PC-9 (cell line): ENCODE measurements at regions of chr14 and their contacts with region 1.

Region 1: DNA sequence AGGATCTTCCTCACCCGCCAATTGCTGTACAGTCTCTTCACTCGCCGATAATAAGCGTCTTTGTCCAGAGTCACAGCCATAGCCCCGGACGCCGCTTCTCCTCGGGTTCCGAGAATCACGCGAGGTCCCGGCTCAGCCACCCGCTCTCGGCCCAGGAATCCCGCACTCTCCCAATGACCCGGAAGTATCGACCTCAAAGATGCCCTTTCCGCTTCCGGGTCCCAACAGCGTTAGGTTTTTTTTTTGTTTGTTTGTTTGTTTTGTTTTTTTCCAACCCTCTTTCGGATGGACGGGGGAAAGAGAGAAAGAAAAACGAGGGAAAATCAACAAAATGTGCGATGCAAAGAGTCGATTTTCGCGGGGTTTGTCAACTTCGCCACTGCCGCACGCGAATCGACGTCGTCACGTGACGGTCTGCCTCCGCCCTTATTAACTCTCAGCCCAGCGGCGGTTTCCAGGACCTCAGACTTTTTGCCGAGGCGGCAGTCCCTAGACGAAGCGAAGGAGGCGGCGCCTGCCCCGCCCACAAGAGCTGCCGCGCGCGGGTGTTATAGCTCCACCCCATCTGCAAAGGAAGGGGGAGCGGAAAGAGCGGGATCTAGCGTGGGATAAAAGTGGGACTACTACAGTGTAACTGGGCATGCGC is at the start of gene SUPT16H:
- DNase-seq: peak; percentile 81 to 83
- H3K4me3 ChIP-seq: peak within 1 kb of the TSS; percentile 92
- H3K27ac ChIP-seq: peak within 1 kb of the TSS; percentile 73
- H3K4me1 ChIP-seq: peaks cover 7% of the 10 kb centered on the region; the same call in 1 of the 2 replicates
- H3K27me3 ChIP-seq: no peaks in the 10 kb centered on the region
- CTCF ChIP-seq: no peak
- total RNA-seq, gene SUPT16H: 57.2 and 65.4 TPM in 2 replicates

Region 2: GRCh38 chr14:21269252-21270046 is 114.5 kb before region 1 on chr14 and contains the start of gene HNRNPC:
- CTCF ChIA-PET with region 1: no interaction called
- POLR2A ChIA-PET with region 1: no interaction called
- intact Hi-C with region 1: loop called (anchors 10 kb)
- DNase-seq: peak; percentile 99 to 100
- H3K4me3 ChIP-seq: peak within 1 kb of the TSS; percentile 94
- H3K27ac ChIP-seq: peak within 1 kb of the TSS; percentile 81
- H3K4me1 ChIP-seq: peaks cover 27% of the 10 kb centered on the region
- H3K27me3 ChIP-seq: no peaks in the 10 kb centered on the region
- CTCF ChIP-seq: no peak
- total RNA-seq, gene HNRNPC: 486 and 550 TPM in 2 replicates

Region 3: GRCh38 chr14:21308479-21309237 is 75.3 kb before region 1 on chr14:
- CTCF ChIA-PET with region 1: no interaction called
- POLR2A ChIA-PET with region 1: no interaction called
- intact Hi-C with region 1: loop called (anchors 2 kb)
- DNase-seq: peak; percentile 84 to 94
- H3K4me3 ChIP-seq: peak overlapping the region; percentile 70
- H3K27ac ChIP-seq: peak overlapping the region; percentile 84
- H3K4me1 ChIP-seq: peaks cover 12% of the 10 kb centered on the region
- H3K27me3 ChIP-seq: no peaks in the 10 kb centered on the region
- CTCF ChIP-seq: no peak

Region 4: DNA sequence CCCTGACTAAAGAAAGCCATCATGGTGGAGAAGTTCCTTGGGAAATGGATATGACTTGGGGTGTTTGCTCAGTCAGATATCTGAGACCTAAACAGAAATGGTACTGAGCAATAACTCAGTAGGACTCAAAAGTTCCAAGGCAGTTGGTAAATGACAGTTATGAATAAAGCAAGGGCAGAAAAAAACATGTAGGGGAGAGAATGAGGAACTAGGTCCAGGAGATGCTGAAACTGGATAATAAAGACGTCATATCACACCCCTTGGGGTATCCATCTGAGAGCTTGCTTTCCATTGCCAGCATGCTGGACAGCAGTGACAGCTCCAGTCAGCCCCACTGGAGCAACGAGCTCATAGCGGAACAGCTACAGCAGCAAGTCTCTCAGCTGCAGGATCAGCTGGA is 66.6 kb before region 1 on chr14:
- CTCF ChIA-PET with region 1: no interaction called
- POLR2A ChIA-PET with region 1: interaction called, 10 read pairs
- intact Hi-C with region 1: no loop called
- DNase-seq: no peak
- H3K4me3 ChIP-seq: no peak overlapping the region
- H3K27ac ChIP-seq: no peak overlapping the region
- H3K4me1 ChIP-seq: peaks cover 13% of the 10 kb centered on the region
- H3K27me3 ChIP-seq: no peaks in the 10 kb centered on the region
- CTCF ChIP-seq: no peak

Region 5: DNA sequence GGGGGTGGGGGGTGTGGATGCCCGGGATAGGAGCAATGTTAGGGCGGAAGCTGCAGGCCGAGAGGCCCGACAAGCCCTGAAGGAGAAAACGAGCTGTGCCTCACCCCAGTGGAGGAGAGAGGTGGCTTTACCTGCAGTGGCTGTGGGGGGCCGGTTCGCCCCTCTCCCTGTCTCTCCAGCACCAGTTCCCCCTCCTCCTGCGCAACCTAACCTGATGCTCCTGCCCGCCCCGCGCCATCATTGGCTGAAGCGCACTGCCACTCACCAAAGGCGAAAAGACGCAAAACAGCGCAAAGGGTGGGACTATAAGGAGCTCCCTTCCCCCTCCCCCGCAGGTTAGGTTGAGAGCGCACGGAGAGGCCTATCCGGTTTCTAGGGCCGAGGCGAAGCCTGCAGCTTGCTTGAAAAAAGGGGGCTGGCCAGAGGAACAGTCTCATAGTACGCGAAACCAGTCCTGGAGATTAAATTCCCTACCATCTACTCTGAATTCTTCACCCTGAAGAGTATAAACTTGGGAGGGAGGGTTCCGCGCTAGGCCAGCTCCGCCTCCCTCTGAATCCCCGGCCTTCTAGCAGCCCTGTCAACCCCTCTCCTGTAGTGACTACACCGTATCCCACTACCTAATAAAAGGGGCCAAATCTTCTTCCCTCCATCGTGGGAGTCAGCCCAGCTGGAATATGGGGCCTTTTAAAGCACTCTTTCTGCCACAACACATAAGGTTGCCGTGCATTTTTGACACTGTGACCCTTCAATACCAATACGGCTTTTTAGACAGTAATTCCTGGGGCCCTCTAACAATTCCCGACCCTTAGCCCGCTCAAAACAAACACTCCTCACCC is 53.3 kb after region 1 on chr14:
- CTCF ChIA-PET with region 1: no interaction called
- POLR2A ChIA-PET with region 1: interaction called, 24 read pairs
- intact Hi-C with region 1: no loop called
- DNase-seq: peak; percentile 92 to 94
- H3K4me3 ChIP-seq: peak overlapping the region; percentile 71
- H3K27ac ChIP-seq: peak overlapping the region; percentile 79
- H3K4me1 ChIP-seq: peaks cover 19% of the 10 kb centered on the region
- H3K27me3 ChIP-seq: no peaks in the 10 kb centered on the region
- CTCF ChIP-seq: no peak